ENCODE measurements at regions of chr19 and their contacts with region 1.

Region 1: GRCh38 chr19:18063463-18063862 is 23.3 kb downstream of the IL12RB1 start:
- DNase-seq: peak in 1 of 3 donors; percentile 44
- H3K4me3 ChIP-seq: no peak overlapping the region
- H3K4me3 Mint-ChIP-seq: no peak overlapping the region
- H3K27ac ChIP-seq: no peak overlapping the region
- H3K27ac Mint-ChIP-seq: peak overlapping the region in 2 of 7 donors; percentile 1 to 85
- H3K4me1 ChIP-seq: peaks cover 3 to 4% of the 10 kb centered on the region in 2 donors
- H3K4me1 Mint-ChIP-seq: peaks cover 5% of the 10 kb centered on the region
- H3K27me3 ChIP-seq: no peaks in the 10 kb centered on the region
- H3K27me3 Mint-ChIP-seq: peaks cover 0 to 1% (median 0%) of the 10 kb centered on the region in 3 donors
- CTCF ChIP-seq: peak; percentile 55

Region 2: GRCh38 chr19:18251587-18252369 is 188.3 kb after region 1 on chr19:
- intact Hi-C with region 1: loop called (anchors 5 to 10 kb)
- DNase-seq: peak; percentile 56 to 77 (median 76)
- H3K4me3 ChIP-seq: no peak overlapping the region
- H3K4me3 Mint-ChIP-seq: peak overlapping the region in 1 of 2 donors; percentile 16
- H3K27ac ChIP-seq: no peak overlapping the region
- H3K27ac Mint-ChIP-seq: peak overlapping the region in 1 of 7 donors; percentile 42
- H3K4me1 ChIP-seq: peaks cover 20 to 25% of the 10 kb centered on the region in 2 donors
- H3K4me1 Mint-ChIP-seq: peaks cover 21% of the 10 kb centered on the region
- H3K27me3 ChIP-seq: peaks cover 0 to 2% of the 10 kb centered on the region in 2 donors
- H3K27me3 Mint-ChIP-seq: peaks cover 5 to 27% (median 10%) of the 10 kb centered on the region in 3 donors
- CTCF ChIP-seq: peak; percentile 84

Measured in CD14-positive monocyte (primary cell).